Activated naive CD4-positive, alpha-beta T cell treated with anti-CD3 and anti-CD28 coated beads, Interleukin-2, amount 10 ng/mL, durations not matched to agents 7 days and 5 days (primary cell): ENCODE measurements at regions of chr4 and their contacts with region 1.

Region 1: DNA sequence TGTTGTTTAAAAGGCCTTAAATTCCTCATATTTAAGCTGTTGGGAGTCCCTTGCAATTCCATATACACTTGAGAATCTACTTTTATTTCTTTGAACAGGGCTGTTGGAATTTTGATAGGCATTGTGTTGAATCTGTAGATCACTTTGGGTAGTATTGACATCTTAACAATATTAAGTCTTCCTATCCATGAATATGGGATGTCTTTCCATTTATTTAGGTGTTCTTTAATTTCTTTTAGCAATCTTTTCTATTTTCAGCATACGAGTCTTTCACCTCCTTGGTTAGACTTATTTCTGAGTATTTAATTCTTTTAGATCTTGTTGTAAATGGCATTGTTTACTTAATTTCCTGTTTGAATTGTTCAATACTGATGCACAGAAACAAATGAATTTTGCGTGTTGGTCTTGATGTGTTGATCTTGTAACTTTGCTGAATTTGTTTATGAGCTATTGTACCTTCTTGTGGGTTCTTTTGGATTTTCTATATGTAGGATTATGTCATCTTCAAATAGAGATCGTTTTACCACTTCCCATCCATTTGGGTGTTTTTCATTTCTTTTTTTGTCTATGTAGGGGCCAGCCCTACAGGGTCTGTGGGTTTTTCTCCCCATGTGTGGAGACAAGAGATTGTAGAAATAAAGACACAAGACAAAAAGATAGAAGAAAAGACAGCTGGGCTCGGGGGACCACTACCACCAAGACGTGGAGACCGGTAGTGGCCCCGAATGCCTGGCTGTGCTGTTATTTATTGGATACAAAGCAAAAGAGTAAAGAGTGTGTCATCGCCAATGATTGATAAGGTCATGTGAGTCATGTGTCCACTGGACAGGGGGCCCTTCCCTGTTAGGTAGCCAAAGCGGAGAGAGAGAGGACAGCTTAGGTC is 18.2 kb upstream of the CTBP1 start:
- DNase-seq: no peak
- H3K4me3 Mint-ChIP-seq: peak overlapping the region; percentile 69
- H3K27ac Mint-ChIP-seq: peak overlapping the region; percentile 99
- H3K4me1 Mint-ChIP-seq: peaks cover 21% of the 10 kb centered on the region
- H3K27me3 Mint-ChIP-seq: no peaks in the 10 kb centered on the region

Region 2: DNA sequence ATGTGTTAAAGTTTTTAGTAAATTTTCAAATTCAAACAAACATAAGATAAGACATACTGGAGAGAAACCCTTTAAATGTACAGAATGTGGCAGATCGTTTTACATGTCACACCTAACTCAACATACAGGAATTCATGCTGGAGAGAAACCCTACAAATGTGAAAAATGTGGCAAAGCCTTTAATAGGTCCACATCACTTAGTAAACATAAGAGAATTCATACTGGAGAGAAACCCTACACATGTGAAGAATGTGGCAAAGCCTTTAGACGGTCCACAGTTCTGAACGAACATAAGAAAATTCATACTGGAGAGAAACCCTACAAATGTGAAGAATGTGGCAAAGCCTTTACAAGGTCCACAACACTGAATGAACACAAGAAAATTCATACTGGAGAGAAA is 1181.2 kb before region 1 on chr4:
- CTCF ChIA-PET with region 1: no interaction called
- DNase-seq: no peak
- H3K4me3 Mint-ChIP-seq: no peak overlapping the region
- H3K27ac Mint-ChIP-seq: no peak overlapping the region
- H3K4me1 Mint-ChIP-seq: no peaks in the 10 kb centered on the region
- H3K27me3 Mint-ChIP-seq: no peaks in the 10 kb centered on the region

Region 3: GRCh38 chr4:1160351-1160750 is 106.8 kb before region 1 on chr4:
- CTCF ChIA-PET with region 1: no interaction called
- DNase-seq: no peak
- H3K4me3 Mint-ChIP-seq: no peak overlapping the region
- H3K27ac Mint-ChIP-seq: no peak overlapping the region
- H3K4me1 Mint-ChIP-seq: peaks cover 6% of the 10 kb centered on the region
- H3K27me3 Mint-ChIP-seq: peaks cover 63% of the 10 kb centered on the region

Region 4: DNA sequence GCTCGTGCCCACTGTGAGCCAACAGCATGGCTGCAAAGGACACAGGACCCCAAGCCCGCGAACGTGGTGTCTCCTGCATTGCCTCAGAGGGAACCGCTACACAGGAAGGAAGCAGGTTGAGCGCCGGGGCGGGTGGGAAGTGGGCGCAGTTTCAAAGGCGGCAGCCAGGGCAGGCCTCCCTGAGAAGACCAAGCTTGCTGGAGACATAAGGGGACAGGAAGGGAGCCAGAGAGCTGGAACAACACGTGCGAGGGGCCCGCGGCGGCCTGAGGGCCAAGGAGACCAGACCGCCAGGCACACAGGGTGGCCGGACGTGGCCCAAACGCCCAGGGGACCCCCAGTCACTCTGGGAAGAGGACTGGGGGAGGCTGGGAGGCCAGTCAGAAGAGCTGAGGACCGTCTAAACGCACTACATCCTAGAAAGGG is 50.2 kb before region 1 on chr4:
- CTCF ChIA-PET with region 1: no interaction called
- DNase-seq: peak; percentile 85
- H3K4me3 Mint-ChIP-seq: peak overlapping the region; percentile 49
- H3K27ac Mint-ChIP-seq: peak overlapping the region; percentile 82
- H3K4me1 Mint-ChIP-seq: peaks cover 37% of the 10 kb centered on the region
- H3K27me3 Mint-ChIP-seq: no peaks in the 10 kb centered on the region

Region 5: DNA sequence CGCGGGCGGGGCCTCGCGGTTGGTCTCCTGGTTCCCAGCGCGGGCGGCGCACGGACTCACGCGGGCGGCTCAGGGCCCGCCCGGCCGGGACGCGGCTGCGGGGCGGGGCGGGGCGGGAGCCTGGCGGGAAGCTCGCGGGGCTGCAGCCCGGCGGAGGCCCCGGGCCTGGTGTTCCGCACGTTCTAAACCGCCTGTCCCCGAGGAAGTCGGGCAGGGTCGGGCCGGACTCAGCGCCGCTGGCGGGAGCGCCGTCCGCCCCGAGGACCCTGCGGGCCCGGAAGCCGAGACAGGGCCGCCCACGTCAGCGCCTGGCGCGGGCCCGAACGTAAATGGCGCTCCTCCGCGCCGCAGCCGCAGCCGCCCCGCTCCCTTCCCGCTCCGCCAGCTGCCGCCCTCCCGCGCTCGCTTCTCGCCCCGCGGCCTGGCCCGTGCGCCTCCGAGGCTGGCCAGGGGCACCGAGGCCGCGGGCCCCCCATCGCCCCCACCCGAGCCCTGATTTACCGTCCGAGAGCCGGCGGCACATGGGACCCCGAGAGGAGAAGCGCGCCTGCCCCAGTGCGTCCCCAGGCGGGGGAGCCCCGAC is 17.9 kb before region 1 on chr4:
- CTCF ChIA-PET with region 1: interaction called, 48 read pairs
- DNase-seq: peak; percentile 84
- H3K4me3 Mint-ChIP-seq: peak overlapping the region; percentile 84
- H3K27ac Mint-ChIP-seq: peak overlapping the region; percentile 98
- H3K4me1 Mint-ChIP-seq: peaks cover 68% of the 10 kb centered on the region
- H3K27me3 Mint-ChIP-seq: no peaks in the 10 kb centered on the region

Region 6: DNA sequence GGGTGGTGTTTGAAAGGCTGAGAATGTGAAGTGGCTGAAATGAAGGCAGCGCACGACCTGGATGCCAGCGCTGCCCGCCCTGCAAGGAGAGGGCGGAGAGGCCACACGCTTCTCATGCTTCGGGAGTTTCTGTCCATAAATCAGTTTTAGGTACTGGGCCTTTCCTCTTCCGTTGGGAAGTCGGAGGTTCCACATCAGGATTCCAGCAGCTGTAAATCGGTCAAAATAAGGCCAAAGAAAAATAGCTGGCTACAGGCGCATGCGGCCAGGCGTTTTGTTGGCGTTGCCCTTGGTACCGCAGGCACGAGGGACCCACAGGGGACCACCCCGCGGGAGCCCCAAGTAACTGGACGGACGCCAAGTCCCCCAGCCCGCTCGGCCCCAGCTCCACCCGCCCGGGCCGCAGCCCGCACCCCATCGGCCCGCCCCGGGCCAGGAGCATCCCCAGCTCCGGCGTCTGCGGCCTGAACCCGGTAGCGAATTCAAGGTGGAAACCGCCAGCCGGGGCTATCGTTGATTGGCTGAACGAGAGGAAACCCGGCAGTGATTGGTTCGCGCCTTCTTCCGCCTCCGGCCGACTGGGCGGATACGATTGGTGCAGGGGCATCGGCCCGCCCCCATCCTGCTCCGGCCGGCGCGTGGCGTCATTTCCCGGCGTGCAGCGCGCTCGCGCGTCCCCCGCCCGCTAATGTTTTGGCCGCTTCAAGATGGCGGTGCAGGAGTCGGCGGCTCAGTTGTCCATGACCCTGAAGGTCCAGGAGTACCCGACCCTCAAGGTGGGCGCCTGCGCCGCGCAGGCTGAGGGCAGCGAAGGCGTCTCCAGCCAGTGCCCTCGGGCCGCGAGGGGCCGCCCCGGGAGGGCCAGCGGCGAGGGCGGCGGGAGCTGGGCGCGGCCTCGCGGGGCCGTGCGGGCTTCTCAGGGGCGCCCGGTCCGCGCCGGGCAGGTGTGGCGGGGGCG is 22.4 kb after region 1 on chr4 and contains the start of gene MAEA:
- CTCF ChIA-PET with region 1: interaction called, 11 read pairs
- DNase-seq: peak; percentile 98
- H3K4me3 Mint-ChIP-seq: peak within 1 kb of the TSS; percentile 96
- H3K27ac Mint-ChIP-seq: peak within 1 kb of the TSS; percentile 92
- H3K4me1 Mint-ChIP-seq: peaks cover 37% of the 10 kb centered on the region
- H3K27me3 Mint-ChIP-seq: no peaks in the 10 kb centered on the region

Region 7: DNA sequence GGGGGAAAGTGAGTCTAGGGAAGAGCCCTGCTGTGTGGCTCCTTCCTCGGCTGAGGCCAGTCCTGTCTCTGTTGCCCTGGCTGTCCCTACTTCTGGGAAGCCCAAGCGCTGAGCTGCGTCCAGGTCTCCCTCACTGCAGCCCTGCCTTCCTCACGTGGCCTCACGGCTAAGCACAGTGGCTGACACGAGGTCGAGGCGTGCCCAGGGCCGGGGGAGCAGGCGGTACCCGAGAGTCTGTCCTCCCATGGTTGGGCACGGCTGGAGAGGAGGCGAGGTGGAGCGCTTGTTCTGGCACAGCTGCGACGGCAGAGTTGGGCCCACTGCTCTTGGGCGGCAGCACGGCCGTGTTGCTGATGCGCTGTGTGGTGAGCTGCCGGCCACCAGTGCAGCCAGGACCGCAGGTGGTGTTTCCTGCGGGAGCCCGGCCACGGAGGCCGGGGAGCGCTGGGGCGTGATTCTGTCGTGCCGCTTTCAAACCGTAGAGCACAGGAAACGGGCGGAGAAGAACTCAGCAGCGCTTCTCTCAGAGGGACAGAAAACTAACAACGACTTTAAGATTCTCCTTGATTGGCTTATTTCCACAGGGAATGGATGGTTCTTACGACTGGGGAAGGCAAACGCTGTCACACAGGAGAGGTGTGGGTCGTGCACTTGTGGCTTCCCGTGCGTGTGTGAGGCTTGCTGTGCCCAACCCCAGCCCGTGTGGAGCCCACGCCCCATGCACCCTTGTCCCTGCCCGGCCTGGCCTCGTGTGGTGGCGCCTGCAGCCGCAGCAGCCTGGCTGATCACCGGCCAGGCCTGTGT is 43.9 kb after region 1 on chr4:
- CTCF ChIA-PET with region 1: no interaction called
- DNase-seq: peak; percentile 47
- H3K4me3 Mint-ChIP-seq: no peak overlapping the region
- H3K27ac Mint-ChIP-seq: peak overlapping the region; percentile 82
- H3K4me1 Mint-ChIP-seq: peaks cover 70% of the 10 kb centered on the region
- H3K27me3 Mint-ChIP-seq: no peaks in the 10 kb centered on the region